Motor neuron (in vitro differentiated cells): ENCODE measurements at regions of chr2 and their contacts with region 1.

Region 1: DNA sequence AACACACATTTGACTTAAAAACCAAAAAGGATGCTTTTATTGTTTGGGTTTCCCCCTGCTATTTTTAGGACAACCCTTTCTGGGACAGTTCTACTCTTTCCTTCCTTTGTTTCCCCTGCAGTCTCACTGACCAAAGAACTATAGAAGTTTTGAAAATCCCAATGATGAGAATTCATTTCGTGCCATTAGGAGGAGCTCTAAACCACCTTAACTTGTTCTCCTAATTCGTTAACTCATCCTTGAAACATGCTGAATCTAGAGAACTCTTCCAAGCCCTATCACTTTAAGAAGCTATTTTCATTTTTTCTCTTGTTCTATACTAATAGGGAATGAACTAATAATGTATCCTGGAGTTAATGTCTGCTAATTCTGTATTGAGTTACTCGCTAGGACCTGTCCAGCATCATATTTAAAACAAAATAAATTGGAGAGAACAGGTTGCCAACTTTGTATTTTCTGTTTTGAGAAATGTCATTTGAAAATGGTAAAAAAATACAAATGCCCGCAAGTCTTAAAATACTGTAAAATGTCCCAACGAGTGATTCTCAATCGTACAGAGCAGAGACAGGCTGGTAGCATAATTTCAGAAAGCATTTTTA is 62.9 kb downstream of the AFTPH start:
- ATAC-seq: peak in 4 of 8 experiments; percentile 50 to 70 (median 62)
- H3K4me3 ChIP-seq: no peak overlapping the region
- H3K27ac ChIP-seq: no peak overlapping the region
- H3K4me1 ChIP-seq: no peaks in the 10 kb centered on the region

Region 2: DNA sequence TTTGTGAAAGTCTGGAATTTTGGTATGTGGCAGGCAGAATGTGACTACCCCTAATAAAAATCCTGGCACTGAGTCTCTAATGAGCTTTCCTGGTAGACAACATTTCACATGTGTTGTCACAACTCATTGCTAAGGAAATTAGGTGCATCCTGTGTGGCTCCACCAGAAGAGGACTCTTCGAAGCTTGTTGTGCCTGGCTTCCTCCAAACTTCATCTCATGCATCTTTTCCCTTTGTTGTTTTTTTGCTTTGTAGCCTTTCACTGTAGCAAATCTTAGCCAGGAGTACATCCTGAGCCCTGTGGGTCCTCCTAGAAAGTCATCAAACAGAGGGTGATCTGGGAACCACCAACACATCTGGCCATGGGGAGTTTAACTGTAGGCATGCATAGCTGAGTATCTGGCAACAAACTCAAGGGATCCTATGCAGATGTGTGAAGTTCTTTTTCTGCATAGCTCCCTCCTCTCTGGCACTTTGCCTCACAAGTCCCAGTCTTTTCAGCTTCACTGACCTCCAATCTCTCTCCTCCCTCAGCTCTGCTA is 108.8 kb after region 1 on chr2:
- in situ Hi-C with region 1: no loop called
- ATAC-seq: peak in 3 of 8 experiments; percentile 73 to 95 (median 92)
- H3K4me3 ChIP-seq: no peak overlapping the region
- H3K27ac ChIP-seq: no peak overlapping the region
- H3K4me1 ChIP-seq: no peaks in the 10 kb centered on the region

Region 3: DNA sequence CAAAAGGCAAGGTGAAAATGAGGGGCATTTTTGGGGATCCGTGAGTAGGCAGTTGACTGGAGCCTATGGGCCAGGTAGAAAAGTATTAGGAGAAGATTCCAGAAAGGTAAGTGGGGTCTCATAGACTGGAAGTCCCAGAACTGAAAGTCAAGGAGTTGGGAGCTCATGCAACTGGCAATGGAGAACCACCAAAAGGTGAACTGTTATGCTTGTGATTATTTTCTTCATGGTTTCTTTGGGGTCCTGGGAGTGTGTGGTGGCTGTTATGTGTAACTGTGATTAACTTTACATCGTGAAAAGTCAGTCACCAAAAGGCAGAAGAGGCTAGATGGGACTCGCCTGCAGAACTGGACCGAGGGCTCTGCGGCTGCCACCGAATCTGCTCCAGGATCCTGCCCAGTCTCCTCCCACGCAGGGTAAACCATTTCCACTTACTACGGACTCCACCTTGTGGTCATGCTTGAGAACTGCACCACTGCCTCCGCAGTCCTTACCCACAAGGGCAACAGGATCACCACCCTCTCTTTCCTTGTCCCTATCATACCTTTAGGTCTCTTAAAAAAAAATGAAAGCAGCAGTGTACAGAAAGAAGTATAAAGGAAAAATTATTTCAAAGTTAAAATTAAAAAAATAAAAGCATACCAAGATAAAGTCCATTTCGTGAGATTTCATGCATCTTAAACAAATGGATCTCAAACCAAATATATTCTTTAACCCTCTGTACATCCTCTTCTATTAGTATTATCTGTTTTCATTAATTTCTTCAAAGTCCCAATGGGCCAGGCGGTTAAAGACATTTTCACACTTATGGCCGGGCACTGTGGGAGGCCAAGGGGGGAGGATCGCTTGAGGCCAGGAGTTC is 453.6 kb after region 1 on chr2:
- in situ Hi-C with region 1: loop called in 1 of 9 experiments (anchors 25 kb)
- ATAC-seq: peak; percentile 92 to 99 (median 96)
- H3K4me3 ChIP-seq: no peak overlapping the region
- H3K27ac ChIP-seq: no peak overlapping the region
- H3K4me1 ChIP-seq: no peaks in the 10 kb centered on the region

Region 4: GRCh38 chr2:65340898-65341681 is 754.1 kb after region 1 on chr2:
- in situ Hi-C with region 1: no loop called
- ATAC-seq: no peak
- H3K4me3 ChIP-seq: no peak overlapping the region
- H3K27ac ChIP-seq: no peak overlapping the region
- H3K4me1 ChIP-seq: no peaks in the 10 kb centered on the region